Breast epithelium (tissue), 4 donors: ENCODE measurements at regions of chr9 and their contacts with region 1.

Region 1: GRCh38 chr9:115672477-115673316 is 480.9 kb upstream of the PAPPA start:
- DNase-seq: no peak
- H3K4me3 ChIP-seq: no peak overlapping the region
- H3K27ac ChIP-seq: peak overlapping the region in 1 of 2 donors; percentile 4
- H3K4me1 ChIP-seq: no peaks in the 10 kb centered on the region
- H3K27me3 ChIP-seq: no peaks in the 10 kb centered on the region
- CTCF ChIP-seq: no peak
- POLR2A ChIP-seq: no peak

Region 2: DNA sequence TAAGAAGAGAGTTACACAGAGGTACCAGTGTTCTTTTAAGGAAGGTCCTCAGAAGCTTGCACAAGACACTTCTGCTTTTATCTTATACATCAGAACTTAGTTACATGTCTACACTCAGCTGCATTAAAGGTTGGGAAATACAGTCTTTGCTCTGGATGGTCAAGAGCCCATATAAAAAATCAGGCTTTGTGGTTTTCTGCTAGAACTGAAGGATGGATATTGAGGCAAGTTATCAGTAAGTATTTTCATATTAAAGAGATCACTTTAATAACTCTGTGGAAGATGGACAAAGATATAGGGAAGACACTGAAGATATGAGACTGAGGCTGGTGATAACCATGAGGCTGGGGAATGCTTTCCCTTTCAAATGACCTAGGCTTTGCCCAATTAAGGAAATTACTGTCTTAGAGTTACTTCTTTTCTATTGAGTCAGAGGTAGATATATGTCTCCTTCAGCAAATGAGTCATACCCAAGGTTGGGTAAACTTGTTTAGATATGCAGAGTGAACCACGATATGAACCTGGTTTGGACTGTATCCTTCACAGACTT is 467.7 kb before region 1 on chr9:
- intact Hi-C with region 1: loop called (anchors 5 kb)
- DNase-seq: no peak
- H3K4me3 ChIP-seq: no peak overlapping the region
- H3K27ac ChIP-seq: no peak overlapping the region
- H3K4me1 ChIP-seq: no peaks in the 10 kb centered on the region
- H3K27me3 ChIP-seq: no peaks in the 10 kb centered on the region
- CTCF ChIP-seq: no peak
- POLR2A ChIP-seq: no peak

Region 3: DNA sequence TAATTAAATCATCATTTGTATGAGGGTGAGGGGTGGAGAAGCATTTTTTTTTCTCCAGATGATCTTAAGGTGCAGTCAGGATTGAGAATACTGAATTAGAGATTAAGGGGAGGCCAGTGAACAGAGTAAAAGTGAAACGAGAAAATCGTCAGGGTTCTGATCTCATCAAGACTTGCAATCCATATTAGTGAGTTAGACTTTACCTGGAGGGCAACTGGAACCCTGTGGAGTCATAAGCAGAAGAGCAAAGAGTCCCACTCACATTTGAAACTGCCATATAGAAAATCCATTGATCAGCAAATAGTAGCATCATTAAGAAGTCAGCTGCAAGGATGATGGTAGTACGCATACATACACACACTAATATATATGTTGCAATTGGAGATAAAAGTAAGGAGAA is 14.7 kb after region 1 on chr9:
- intact Hi-C with region 1: loop called (anchors 2 kb)
- DNase-seq: no peak
- H3K4me3 ChIP-seq: no peak overlapping the region
- H3K27ac ChIP-seq: no peak overlapping the region
- H3K4me1 ChIP-seq: no peaks in the 10 kb centered on the region
- H3K27me3 ChIP-seq: no peaks in the 10 kb centered on the region
- CTCF ChIP-seq: no peak
- POLR2A ChIP-seq: no peak

Region 4: GRCh38 chr9:116337015-116337414 is 664.3 kb after region 1 on chr9:
- intact Hi-C with region 1: loop called (anchors 5 kb)
- DNase-seq: no peak
- H3K4me3 ChIP-seq: no peak overlapping the region
- H3K27ac ChIP-seq: no peak overlapping the region
- H3K4me1 ChIP-seq: no peaks in the 10 kb centered on the region
- H3K27me3 ChIP-seq: no peaks in the 10 kb centered on the region
- CTCF ChIP-seq: no peak
- POLR2A ChIP-seq: no peak